CD14-positive monocyte (primary cell): ENCODE measurements at regions of chr1 and their contacts with region 1.

Region 1: DNA sequence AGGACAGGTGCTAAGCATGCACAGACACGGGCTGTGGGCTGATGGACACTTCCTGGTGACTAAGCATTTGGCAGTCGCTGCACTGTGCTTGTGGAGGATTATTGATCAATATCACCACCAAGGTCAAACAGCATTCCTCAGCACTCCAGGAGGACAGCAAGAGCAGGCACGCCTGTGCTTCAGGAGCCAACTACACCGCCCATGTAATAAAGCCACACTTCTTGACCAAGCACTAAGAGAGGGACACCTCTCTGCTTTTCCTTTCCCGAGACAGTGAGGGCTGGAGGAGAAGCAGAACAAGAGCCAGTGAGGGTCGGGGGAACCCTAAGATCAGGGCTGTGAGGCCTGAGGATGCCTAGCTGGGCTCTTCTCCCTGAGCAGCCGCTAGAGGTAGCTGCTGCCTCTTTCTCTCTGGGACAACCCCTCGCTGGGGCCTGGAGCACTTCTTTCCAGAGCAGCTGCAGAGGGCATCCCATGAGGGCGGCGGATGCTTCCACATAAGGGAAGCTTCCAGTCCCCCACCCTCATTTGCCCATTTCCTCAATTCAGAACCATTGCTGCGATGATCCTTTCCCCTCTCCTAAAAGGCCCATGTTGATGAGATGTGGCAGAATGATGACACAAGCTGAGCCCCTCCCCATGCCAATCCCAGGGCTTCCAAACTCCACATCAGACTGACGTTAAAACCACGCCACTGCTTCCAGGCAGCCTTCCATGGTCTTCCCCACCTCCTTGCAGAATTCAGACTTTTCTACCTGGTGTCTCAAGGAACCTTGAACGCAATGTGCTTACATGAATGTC is 19.1 kb downstream of the RAB7B start:
- DNase-seq: peak; percentile 36 to 50 (median 42)
- H3K4me3 ChIP-seq: no peak overlapping the region
- H3K4me3 Mint-ChIP-seq: no peak overlapping the region
- H3K27ac ChIP-seq: no peak overlapping the region
- H3K27ac Mint-ChIP-seq: peak overlapping the region in 1 of 7 donors; percentile 46
- H3K4me1 ChIP-seq: peaks cover 0 to 12% of the 10 kb centered on the region in 2 donors
- H3K4me1 Mint-ChIP-seq: peaks cover 15% of the 10 kb centered on the region
- H3K27me3 ChIP-seq: no peaks in the 10 kb centered on the region
- H3K27me3 Mint-ChIP-seq: peaks cover 0 to 2% (median 0%) of the 10 kb centered on the region in 3 donors
- CTCF ChIP-seq: peak; percentile 78

Region 2: GRCh38 chr1:205237526-205238484 is 746.3 kb before region 1 on chr1:
- intact Hi-C with region 1: no loop called
- DNase-seq: no peak
- H3K4me3 ChIP-seq: peak overlapping the region in 1 of 3 experiments; percentile 9
- H3K4me3 Mint-ChIP-seq: peak overlapping the region in 1 of 2 donors; percentile 52
- H3K27ac ChIP-seq: no peak overlapping the region
- H3K27ac Mint-ChIP-seq: peak overlapping the region in 2 of 7 donors; percentile 54 to 81
- H3K4me1 ChIP-seq: peaks cover 12 to 16% of the 10 kb centered on the region in 2 donors
- H3K4me1 Mint-ChIP-seq: peaks cover 19% of the 10 kb centered on the region
- H3K27me3 ChIP-seq: no peaks in the 10 kb centered on the region
- H3K27me3 Mint-ChIP-seq: peaks cover 0 to 2% (median 1%) of the 10 kb centered on the region in 3 donors
- CTCF ChIP-seq: no peak

Region 3: DNA sequence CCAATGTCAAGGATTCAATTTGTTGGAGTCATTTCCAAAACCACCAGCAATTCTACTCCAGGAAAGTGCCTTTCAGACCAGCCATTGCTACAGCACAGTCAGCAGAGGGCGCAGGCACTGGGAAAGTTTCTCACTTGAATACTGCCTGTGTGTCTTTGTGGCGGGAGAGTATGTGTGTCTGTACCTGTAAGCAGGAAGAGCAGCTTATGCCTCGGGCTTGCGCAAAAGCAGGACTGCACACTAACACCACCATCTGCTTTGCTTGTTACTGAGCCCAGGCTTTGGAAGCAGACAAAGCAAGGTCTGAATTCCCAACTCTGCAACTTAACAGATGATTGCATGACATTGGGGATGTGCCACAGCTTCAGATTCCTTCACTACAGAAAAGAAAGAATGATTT is 46.6 kb after region 1 on chr1:
- intact Hi-C with region 1: loop called in 1 of 2 experiments (anchors 10 kb)
- DNase-seq: peak; percentile 56 to 69 (median 69)
- H3K4me3 ChIP-seq: no peak overlapping the region
- H3K4me3 Mint-ChIP-seq: no peak overlapping the region
- H3K27ac ChIP-seq: no peak overlapping the region
- H3K27ac Mint-ChIP-seq: no peak overlapping the region
- H3K4me1 ChIP-seq: peaks cover 24 to 32% of the 10 kb centered on the region in 2 donors
- H3K4me1 Mint-ChIP-seq: peaks cover 31% of the 10 kb centered on the region
- H3K27me3 ChIP-seq: no peaks in the 10 kb centered on the region
- H3K27me3 Mint-ChIP-seq: peaks cover 0 to 6% (median 5%) of the 10 kb centered on the region in 3 donors
- CTCF ChIP-seq: peak; percentile 91